Sciatic nerve (tissue), 2 donors: ENCODE measurements at regions of chr7 and their contacts with region 1.

Region 1: DNA sequence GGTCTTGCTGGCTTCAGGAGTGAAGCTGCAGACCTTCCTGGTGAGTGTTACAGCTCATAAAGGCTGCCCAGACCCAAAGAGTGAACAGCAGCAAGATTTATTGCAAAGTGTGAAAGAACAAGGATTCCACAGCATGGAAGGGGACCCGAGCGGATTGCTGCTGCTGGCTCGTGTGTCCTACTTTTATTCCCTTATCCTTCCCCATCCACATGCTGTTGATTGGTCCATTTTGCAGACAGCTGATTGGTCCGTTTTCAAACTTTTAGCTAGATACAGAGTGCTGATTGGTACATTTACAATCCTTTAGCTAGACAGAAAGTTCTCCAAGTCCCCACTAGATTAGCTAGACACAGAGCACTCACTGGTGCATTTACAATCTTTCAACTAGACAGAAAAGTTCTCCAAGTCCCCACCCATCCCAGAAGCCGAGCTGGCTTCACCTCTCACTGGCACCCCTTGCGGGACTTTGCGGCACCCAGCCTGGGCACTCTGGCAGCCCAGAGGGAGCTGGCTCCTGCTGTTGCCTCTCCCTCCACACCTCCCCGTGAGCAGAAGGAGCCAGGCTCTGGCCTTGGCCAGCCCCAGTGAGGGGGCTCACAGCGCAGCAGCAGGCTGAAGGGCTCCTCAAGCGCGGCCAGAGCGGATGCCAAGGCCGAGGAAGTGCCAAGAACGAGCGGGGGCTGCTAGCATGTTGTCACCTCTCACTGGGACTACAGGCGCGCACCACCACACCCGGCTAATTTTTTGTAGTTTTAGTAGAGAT is 369.6 kb upstream of the POT1 start:
- DNase-seq: no peak
- ATAC-seq: no peak

Region 2: DNA sequence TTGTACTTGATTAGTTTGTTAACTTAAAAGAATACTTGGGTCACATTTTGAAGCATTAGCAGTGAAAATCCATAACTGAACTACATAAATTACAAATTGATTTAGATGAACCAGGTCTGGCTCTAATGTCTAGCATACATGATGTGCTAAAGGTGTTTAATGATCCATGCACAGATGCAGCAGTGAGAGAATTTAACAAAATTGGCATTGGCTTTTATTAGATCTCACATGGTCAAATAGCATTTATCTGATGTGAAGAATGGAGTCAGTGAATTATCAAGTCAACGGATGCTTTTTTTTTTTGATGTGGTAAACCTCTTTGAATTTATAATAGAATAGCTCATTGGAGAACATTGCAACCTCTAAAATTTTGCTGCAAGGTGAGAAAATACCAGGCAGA is 76.6 kb before region 1 on chr7:
- intact Hi-C with region 1: loop called (anchors 2 kb)
- DNase-seq: no peak
- ATAC-seq: no peak